IMR-90 (cell line): ENCODE measurements at regions of chr5 and their contacts with region 1.

Region 1: GRCh38 chr5:113606298-113607134 is 93.0 kb downstream of the YTHDC2 start:
- DNase-seq: peak; percentile 56
- ATAC-seq: peak; percentile 90
- H3K4me3 ChIP-seq: no peak overlapping the region
- H3K27ac ChIP-seq: no peak overlapping the region
- H3K4me1 ChIP-seq: peaks cover 6% of the 10 kb centered on the region; the same call in 1 of the 2 replicates
- H3K27me3 ChIP-seq: no peaks in the 10 kb centered on the region; the same call in 1 of the 2 replicates
- CTCF ChIP-seq: peak; percentile 80
- POLR2A ChIP-seq: no peak
- RAD21 ChIP-seq: peak; percentile 91

Region 2: DNA sequence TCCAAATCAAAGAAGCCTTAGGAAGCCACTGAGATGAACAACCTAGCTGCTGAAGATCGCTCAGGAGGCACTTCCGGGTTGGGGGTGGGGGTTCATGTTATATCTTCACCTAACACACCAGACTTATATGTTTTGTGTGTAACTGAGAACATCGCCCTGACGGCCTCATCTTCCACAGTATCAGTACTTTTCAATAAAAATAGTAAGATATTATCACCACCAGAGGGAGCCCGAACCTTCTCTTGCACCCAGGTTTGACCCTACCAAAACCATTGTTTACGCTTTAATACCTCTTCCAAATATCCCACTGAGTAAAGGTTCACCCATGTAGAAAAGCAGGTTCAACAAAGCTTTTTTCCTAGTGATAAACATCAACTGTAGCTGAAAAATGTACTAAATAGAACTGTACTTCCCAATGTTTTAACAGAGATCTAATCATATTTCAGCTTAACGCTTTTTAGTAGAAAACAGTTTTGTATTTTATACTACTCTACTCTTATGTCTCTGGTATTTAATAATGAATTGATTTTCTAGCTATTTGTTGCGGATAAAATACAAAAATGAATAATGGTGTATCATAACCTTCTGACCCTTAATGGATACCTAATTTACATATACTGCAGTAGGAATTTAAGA is 1431.4 kb before region 1 on chr5:
- CTCF ChIA-PET with region 1: no interaction called
- POLR2A ChIA-PET with region 1: no interaction called
- dilution Hi-C with region 1: no loop called
- in situ Hi-C with region 1: loop called (anchors 10 kb)
- intact Hi-C with region 1: loop called (anchors 1 kb)
- DNase-seq: peak; percentile 26
- ATAC-seq: peak; percentile 80
- H3K4me3 ChIP-seq: 0 out of 2 replicates have a peak overlapping the region, but pooled peaks have one; percentile 27
- H3K27ac ChIP-seq: no peak overlapping the region
- H3K4me1 ChIP-seq: no peaks in the 10 kb centered on the region
- H3K27me3 ChIP-seq: no peaks in the 10 kb centered on the region
- CTCF ChIP-seq: peak; percentile 56
- POLR2A ChIP-seq: no peak
- RAD21 ChIP-seq: peak; percentile 48

Region 3: GRCh38 chr5:113336975-113337374 is 269.5 kb before region 1 on chr5:
- CTCF ChIA-PET with region 1: interaction called, 3 read pairs
- POLR2A ChIA-PET with region 1: no interaction called
- dilution Hi-C with region 1: no loop called
- in situ Hi-C with region 1: no loop called
- intact Hi-C with region 1: loop called (anchors 2 kb)
- DNase-seq: peak; percentile 77
- ATAC-seq: peak; percentile 82
- H3K4me3 ChIP-seq: no peak overlapping the region
- H3K27ac ChIP-seq: no peak overlapping the region
- H3K4me1 ChIP-seq: peaks cover 4% of the 10 kb centered on the region; the same call in 1 of the 2 replicates
- H3K27me3 ChIP-seq: no peaks in the 10 kb centered on the region
- CTCF ChIP-seq: peak; percentile 55
- POLR2A ChIP-seq: no peak
- RAD21 ChIP-seq: peak; percentile 67

Region 4: GRCh38 chr5:113378959-113379541 is 227.5 kb before region 1 on chr5:
- CTCF ChIA-PET with region 1: no interaction called
- POLR2A ChIA-PET with region 1: no interaction called
- dilution Hi-C with region 1: no loop called
- in situ Hi-C with region 1: loop called (anchors 10 kb)
- intact Hi-C with region 1: loop called (anchors 1 kb)
- DNase-seq: peak; percentile 62
- ATAC-seq: peak; percentile 66
- H3K4me3 ChIP-seq: no peak overlapping the region
- H3K27ac ChIP-seq: peak overlapping the region; percentile 19; the same call in 1 of the 2 replicates
- H3K4me1 ChIP-seq: peaks cover 16% of the 10 kb centered on the region
- H3K27me3 ChIP-seq: no peaks in the 10 kb centered on the region
- CTCF ChIP-seq: peak; percentile 64
- POLR2A ChIP-seq: no peak
- RAD21 ChIP-seq: peak; percentile 61

Region 5: DNA sequence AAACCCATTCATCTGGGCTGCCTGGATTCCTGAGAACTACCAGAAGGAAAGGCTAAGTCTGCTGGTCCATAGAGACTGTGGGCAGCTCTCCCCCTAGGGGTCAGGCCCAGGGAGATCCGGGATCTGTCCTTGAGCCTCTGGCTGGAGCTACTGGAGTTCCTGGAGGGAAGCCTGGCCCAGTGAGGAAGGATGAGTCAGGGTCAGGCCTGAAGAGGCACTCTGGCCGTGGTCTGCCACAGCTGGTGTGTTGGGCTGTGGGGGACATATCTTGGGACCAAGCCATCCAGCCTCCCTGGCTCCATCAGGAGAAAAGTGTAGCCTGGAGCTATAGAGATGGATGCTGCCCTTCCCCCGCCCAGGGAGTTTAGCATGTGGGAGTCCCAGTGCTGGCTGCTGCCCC is 124.3 kb after region 1 on chr5:
- CTCF ChIA-PET with region 1: no interaction called
- POLR2A ChIA-PET with region 1: no interaction called
- dilution Hi-C with region 1: no loop called
- in situ Hi-C with region 1: no loop called
- intact Hi-C with region 1: no loop called
- DNase-seq: no peak
- ATAC-seq: no peak
- H3K4me3 ChIP-seq: no peak overlapping the region
- H3K27ac ChIP-seq: no peak overlapping the region
- H3K4me1 ChIP-seq: no peaks in the 10 kb centered on the region
- H3K27me3 ChIP-seq: no peaks in the 10 kb centered on the region
- CTCF ChIP-seq: no peak
- POLR2A ChIP-seq: no peak
- RAD21 ChIP-seq: no peak

Region 6: DNA sequence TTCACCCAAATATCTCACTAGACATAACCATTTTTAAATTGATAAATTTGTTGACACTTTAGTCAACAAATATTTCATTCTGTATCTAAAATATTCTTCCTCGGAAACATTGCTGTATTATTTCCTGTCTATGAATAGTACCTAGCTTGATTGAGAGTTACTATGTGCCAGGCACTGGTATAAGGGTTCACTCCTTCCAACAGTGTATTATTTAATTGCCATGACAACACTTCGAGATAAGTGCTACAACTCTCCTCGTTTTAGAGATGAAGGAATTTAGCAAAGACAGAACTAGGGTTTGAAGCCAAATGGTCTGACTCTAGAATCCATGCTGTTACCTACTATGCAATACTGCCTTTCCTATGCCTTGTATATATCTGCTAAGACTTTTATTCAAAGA is 194.2 kb after region 1 on chr5:
- CTCF ChIA-PET with region 1: no interaction called
- POLR2A ChIA-PET with region 1: no interaction called
- dilution Hi-C with region 1: no loop called
- in situ Hi-C with region 1: no loop called
- intact Hi-C with region 1: no loop called
- DNase-seq: no peak
- ATAC-seq: no peak
- H3K4me3 ChIP-seq: no peak overlapping the region
- H3K27ac ChIP-seq: no peak overlapping the region
- H3K4me1 ChIP-seq: no peaks in the 10 kb centered on the region
- H3K27me3 ChIP-seq: no peaks in the 10 kb centered on the region
- CTCF ChIP-seq: no peak
- POLR2A ChIP-seq: no peak
- RAD21 ChIP-seq: no peak

Region 7: DNA sequence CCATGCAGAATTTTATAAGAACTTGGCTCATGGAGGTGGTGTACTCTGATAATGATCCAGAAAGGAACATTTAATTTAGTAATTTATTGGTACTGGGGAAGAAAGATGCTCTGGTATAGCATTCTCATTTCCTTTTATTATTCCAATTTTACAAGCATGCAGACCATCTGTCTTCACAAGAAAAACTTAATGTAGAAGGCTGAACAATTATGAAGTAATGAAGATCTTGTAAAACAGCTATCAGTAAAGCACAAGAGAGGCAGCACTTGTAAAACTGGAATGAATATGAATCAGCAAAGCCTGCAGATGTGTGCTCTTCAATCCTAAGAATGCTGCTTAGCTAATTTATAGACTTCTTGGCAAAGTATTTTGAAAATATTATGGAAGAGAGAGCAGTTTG is 206.9 kb after region 1 on chr5:
- CTCF ChIA-PET with region 1: no interaction called
- POLR2A ChIA-PET with region 1: no interaction called
- dilution Hi-C with region 1: no loop called
- in situ Hi-C with region 1: no loop called
- intact Hi-C with region 1: no loop called
- DNase-seq: no peak
- ATAC-seq: no peak
- H3K4me3 ChIP-seq: no peak overlapping the region
- H3K27ac ChIP-seq: no peak overlapping the region
- H3K4me1 ChIP-seq: no peaks in the 10 kb centered on the region
- H3K27me3 ChIP-seq: no peaks in the 10 kb centered on the region
- CTCF ChIP-seq: no peak
- POLR2A ChIP-seq: no peak
- RAD21 ChIP-seq: no peak